ENCODE measurements at regions of chr16 and their contacts with region 1.

Region 1: GRCh38 chr16:71961066-71962039 is 38.8 kb downstream of the PKD1L3 start:
- DNase-seq: peak; percentile 84
- ATAC-seq: peak; percentile 82
- H3K4me3 ChIP-seq: no peak overlapping the region
- H3K4me3 Mint-ChIP-seq: no peak overlapping the region
- H3K27ac ChIP-seq: no peak overlapping the region
- H3K27ac Mint-ChIP-seq: no peak overlapping the region
- H3K4me1 ChIP-seq: peaks cover 13 to 18% of the 10 kb centered on the region in 2 donors
- H3K4me1 Mint-ChIP-seq: peaks cover 24% of the 10 kb centered on the region
- H3K27me3 ChIP-seq: no peaks in the 10 kb centered on the region
- H3K27me3 Mint-ChIP-seq: no peaks in the 10 kb centered on the region
- CTCF ChIP-seq: peak; percentile 85

Region 2: GRCh38 chr16:71808593-71809459 is 152.5 kb before region 1 on chr16 and contains the start of gene AP1G1:
- CTCF ChIA-PET with region 1: interaction called, 5 read pairs
- POLR2A ChIA-PET with region 1: no interaction called
- intact Hi-C with region 1: loop called (anchors 10 kb)
- DNase-seq: peak; percentile 99
- ATAC-seq: peak; percentile 89
- H3K4me3 ChIP-seq: peak within 1 kb of the TSS; percentile 87 to 99 (median 96)
- H3K4me3 Mint-ChIP-seq: peak within 1 kb of the TSS; percentile 99
- H3K27ac ChIP-seq: peak within 1 kb of the TSS; percentile 96 to 99
- H3K27ac Mint-ChIP-seq: peak within 1 kb of the TSS; percentile 100
- H3K4me1 ChIP-seq: peaks cover 20 to 27% of the 10 kb centered on the region in 2 donors
- H3K4me1 Mint-ChIP-seq: peaks cover 30% of the 10 kb centered on the region
- H3K27me3 ChIP-seq: no peaks in the 10 kb centered on the region
- H3K27me3 Mint-ChIP-seq: no peaks in the 10 kb centered on the region
- CTCF ChIP-seq: no peak
- total RNA-seq, gene AP1G1: 142 and 159 TPM in 2 replicates

Region 3: DNA sequence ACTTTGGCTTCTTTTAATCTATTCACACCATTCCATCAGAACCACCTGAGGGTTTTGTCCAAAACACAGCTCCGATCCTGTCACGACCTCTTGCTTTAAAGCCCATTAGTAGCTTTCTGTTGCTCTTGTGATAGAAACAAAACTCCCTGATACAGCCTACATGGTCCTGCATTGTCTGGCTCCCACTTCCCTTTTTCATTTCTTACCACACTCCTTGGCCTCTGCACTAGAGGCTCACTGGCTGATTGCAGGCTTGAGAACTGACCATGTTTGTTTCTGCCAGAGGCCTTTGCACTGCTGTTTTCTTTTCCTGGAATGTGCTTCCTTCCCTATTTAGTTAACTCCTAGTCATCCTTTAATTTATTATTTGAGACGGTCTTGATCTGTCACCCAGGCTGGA is 42.3 kb before region 1 on chr16:
- CTCF ChIA-PET with region 1: interaction called, 11 read pairs
- POLR2A ChIA-PET with region 1: no interaction called
- intact Hi-C with region 1: no loop called
- DNase-seq: peak; percentile 34
- ATAC-seq: peak; percentile 51
- H3K4me3 ChIP-seq: no peak overlapping the region
- H3K4me3 Mint-ChIP-seq: no peak overlapping the region
- H3K27ac ChIP-seq: peak overlapping the region in 1 of 2 donors; percentile 37
- H3K27ac Mint-ChIP-seq: no peak overlapping the region
- H3K4me1 ChIP-seq: peaks cover 3 to 4% of the 10 kb centered on the region in 2 donors
- H3K4me1 Mint-ChIP-seq: peaks cover 25% of the 10 kb centered on the region
- H3K27me3 ChIP-seq: no peaks in the 10 kb centered on the region
- H3K27me3 Mint-ChIP-seq: no peaks in the 10 kb centered on the region
- CTCF ChIP-seq: no peak

Region 4: GRCh38 chr16:72008424-72009216 is 47.3 kb after region 1 on chr16 and contains the start of gene DHODH:
- CTCF ChIA-PET with region 1: no interaction called
- POLR2A ChIA-PET with region 1: no interaction called
- intact Hi-C with region 1: loop called (anchors 5 kb)
- DNase-seq: peak; percentile 99
- ATAC-seq: peak; percentile 98
- H3K4me3 ChIP-seq: peak within 1 kb of the TSS; percentile 56 to 96 (median 66)
- H3K4me3 Mint-ChIP-seq: peak within 1 kb of the TSS; percentile 95
- H3K27ac ChIP-seq: peak within 1 kb of the TSS; percentile 73 to 85
- H3K27ac Mint-ChIP-seq: peak within 1 kb of the TSS; percentile 94
- H3K4me1 ChIP-seq: peaks cover 0 to 12% of the 10 kb centered on the region in 2 donors
- H3K4me1 Mint-ChIP-seq: peaks cover 16% of the 10 kb centered on the region
- H3K27me3 ChIP-seq: no peaks in the 10 kb centered on the region
- H3K27me3 Mint-ChIP-seq: peaks cover 4% of the 10 kb centered on the region
- CTCF ChIP-seq: no peak
- total RNA-seq, gene DHODH: 11.3 and 14.7 TPM in 2 replicates

Region 5: DNA sequence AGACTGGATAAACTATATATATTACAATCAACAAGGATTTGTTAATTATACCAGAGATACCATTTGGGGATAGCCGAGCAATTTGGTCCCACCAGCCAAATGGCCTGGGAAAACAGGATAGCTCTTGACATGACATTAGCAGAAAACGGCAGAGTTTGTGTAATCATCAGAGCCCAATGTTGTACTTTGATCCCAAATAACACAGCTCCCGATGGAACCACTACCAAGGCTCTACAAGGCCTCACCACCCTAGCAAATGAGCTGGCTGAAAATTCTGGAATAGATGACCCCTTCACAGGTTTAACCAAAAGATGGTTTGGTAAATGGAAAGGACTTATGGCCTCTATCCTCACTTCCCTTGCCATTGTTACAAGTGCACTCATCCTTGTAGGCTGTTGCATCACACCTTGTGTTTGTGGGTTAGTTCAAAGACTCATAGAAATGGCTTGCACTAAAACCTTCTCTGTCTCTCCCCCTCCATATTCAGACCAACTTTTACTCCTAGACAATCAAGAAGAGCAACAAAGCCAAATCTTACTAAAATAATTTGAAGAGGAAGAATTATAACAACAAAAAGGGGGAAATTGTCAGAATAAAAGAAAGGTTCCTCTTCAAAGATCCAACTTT is 122.5 kb after region 1 on chr16:
- CTCF ChIA-PET with region 1: no interaction called
- POLR2A ChIA-PET with region 1: no interaction called
- intact Hi-C with region 1: no loop called
- DNase-seq: no peak
- ATAC-seq: no peak
- H3K4me3 ChIP-seq: no peak overlapping the region
- H3K4me3 Mint-ChIP-seq: no peak overlapping the region
- H3K27ac ChIP-seq: no peak overlapping the region
- H3K27ac Mint-ChIP-seq: no peak overlapping the region
- H3K4me1 ChIP-seq: no peaks in the 10 kb centered on the region
- H3K4me1 Mint-ChIP-seq: no peaks in the 10 kb centered on the region
- H3K27me3 ChIP-seq: no peaks in the 10 kb centered on the region
- H3K27me3 Mint-ChIP-seq: no peaks in the 10 kb centered on the region
- CTCF ChIP-seq: no peak